ENCODE measurements at regions of chr12 and their contacts with region 1.

Region 1: GRCh38 chr12:47387994-47388393 is 308.2 kb upstream of the AMIGO2 start:
- DNase-seq: no peak
- H3K4me3 ChIP-seq: no peak overlapping the region
- CTCF ChIP-seq: no peak
- POLR2A ChIP-seq: no peak

Region 2: GRCh38 chr12:47321436-47321835 is 66.6 kb before region 1 on chr12:
- intact Hi-C with region 1: loop called (anchors 2 kb)
- DNase-seq: no peak
- H3K4me3 ChIP-seq: no peak overlapping the region
- CTCF ChIP-seq: no peak
- POLR2A ChIP-seq: no peak

Region 3: DNA sequence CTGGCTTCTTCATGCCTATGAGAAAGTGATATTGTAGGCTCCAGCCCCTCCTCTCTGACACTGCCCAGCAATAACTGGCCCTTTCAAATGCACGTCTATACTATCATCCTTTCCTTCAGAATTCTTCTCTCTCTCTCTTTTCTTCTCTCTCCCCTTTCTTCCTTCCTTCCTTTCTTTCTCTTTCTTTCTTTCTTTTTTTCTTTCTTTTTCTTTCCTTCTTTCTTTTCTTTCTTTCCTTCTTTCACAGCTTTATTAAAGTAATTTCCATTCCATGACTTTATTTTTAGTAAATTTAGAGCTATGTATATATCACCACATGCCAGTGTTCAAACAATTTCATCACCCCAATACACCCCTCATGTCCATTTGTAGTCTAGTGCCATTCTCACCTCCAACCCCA is 15.7 kb after region 1 on chr12:
- intact Hi-C with region 1: loop called (anchors 1 kb)
- DNase-seq: no peak
- H3K4me3 ChIP-seq: no peak overlapping the region
- CTCF ChIP-seq: no peak
- POLR2A ChIP-seq: no peak

Region 4: DNA sequence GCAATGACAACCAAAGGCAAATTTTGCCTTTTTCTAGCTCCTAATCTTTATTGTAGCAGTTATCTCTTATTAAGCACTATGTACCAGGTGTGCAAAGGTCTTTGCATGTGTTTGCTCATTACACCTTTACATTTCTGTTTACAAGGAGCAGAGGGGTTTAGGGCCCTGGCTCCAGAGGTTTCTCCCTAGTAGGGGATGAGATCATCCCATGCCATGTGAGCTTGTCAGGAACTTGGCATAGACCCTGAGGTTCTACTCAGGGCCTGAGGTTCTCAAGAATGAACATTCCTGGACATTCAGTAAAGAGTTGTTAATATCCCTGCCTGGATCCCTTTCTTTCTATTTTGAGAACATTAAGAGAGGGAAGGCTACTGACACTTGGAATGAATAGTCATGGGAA is 25.8 kb after region 1 on chr12:
- intact Hi-C with region 1: no loop called
- DNase-seq: no peak
- H3K4me3 ChIP-seq: no peak overlapping the region
- CTCF ChIP-seq: no peak
- POLR2A ChIP-seq: no peak